ENCODE measurements at regions of chr11 and their contacts with region 1.

Region 1: GRCh38 chr11:59283825-59284772 is 71.4 kb upstream of the MPEG1 start:
- DNase-seq: peak in 2 of 10 donors; percentile 28 to 35

Region 2: GRCh38 chr11:59207988-59208451 is 76.1 kb before region 1 on chr11:
- intact Hi-C with region 1: loop called (anchors 5 kb)
- DNase-seq: peak in 2 of 10 donors; percentile 32 to 48